Activated T-helper 1 cell treated with anti-CD3 and anti-CD28 coated beads, Interleukin-12 subunit alpha, Interleukin-12 subunit beta, Interleukin-2, Interleukin-4 antibody, amounts not matched to agents 30 ng/mL and 10 ng/mL and 1 ng/mL, durations not matched to agents 14 hours and 24 hours and 36 hours (primary cell): ENCODE measurements at regions of chr6 and their contacts with region 1.

Region 1: GRCh38 chr6:44127186-44128019 is at the starts of genes MRPL14 and TMEM63B:
- DNase-seq: peak; percentile 89
- H3K4me3 Mint-ChIP-seq: peak within 1 kb of the TSS; percentile 90
- H3K27ac Mint-ChIP-seq: peak within 1 kb of the TSS; percentile 94
- H3K4me1 Mint-ChIP-seq: peaks cover 50% of the 10 kb centered on the region
- H3K27me3 Mint-ChIP-seq: no peaks in the 10 kb centered on the region
- total RNA-seq, gene MRPL14: 62.6 and 68.6 TPM in 2 replicates
- total RNA-seq, gene TMEM63B: 17.0 and 20.7 TPM in 2 replicates

Region 2: DNA sequence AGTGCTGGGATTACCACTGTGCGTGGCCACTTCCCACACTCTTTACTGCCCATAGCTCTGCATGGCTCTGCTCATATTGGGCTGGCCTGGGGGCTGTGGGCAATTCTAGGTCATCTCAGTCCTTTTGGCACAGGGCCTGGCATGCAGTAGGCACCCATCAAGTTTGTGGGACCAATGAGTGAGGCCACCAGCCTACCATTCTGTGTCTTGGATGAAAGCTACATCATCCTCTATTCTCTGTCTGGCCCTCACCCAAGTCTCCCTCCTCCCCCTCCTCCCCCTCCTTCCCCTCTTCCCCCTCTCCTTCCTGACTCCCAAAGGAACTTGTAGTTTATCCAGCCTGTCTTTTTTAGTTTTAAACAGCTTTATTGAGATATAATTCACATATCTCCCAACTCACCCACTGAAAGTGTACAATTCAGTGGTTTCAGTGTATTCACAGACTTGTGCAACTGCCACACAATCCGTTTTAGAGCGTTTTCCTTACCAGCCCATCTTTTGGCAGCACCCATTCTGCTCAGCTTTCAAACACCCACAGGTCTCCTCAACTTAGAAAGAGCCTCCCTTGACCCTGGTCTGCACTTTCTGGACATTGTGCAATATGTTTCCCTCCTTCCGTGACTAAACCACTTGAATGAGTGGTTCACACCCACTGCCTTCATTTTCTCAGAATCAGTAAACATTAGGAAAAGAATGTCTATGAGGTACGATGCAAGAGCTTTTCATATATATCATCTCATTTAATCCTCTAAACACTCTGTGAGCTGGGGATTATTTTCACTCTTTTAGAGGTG is 418.3 kb before region 1 on chr6:
- intact Hi-C with region 1: loop called (anchors 1 kb)
- DNase-seq: no peak
- H3K4me3 Mint-ChIP-seq: no peak overlapping the region
- H3K27ac Mint-ChIP-seq: peak overlapping the region; percentile 50
- H3K4me1 Mint-ChIP-seq: peaks cover 30% of the 10 kb centered on the region
- H3K27me3 Mint-ChIP-seq: peaks cover 16% of the 10 kb centered on the region

Region 3: DNA sequence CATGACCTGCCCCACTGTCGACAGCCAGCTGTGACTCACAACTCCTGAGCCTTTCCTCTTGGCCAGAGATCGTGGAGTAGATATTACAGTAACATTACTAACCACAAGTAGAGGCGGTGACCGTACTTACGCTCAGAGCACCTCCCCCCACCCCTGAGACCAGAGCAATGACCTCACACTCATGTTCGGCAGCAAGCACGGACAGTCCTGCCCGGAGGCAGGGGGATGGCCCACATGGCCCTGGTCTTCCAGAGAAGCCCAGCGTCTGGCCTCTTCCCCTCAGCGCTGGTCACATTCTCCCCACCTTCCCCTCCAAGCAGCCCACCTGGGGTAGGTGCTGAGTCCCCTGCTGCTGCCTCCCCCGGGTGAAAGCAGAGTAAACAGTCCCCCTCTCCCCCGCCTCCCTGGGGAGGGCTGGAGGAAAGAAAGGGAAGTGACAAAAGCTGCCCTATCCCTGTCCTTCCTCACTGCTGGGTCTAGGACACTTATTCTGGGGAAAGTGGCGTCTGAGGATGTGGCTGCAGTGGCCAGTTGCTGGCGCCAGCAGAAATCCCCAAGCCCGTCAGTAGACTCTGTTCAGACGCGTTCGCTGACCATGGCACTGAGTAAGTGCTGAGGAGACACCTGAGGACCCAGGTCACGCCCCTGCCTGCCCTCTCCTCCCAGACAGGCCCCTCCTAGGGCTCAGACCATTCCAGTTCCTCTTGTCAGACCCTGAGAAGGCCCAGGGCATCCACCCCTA is 68.6 kb before region 1 on chr6:
- intact Hi-C with region 1: no loop called
- DNase-seq: no peak
- H3K4me3 Mint-ChIP-seq: no peak overlapping the region
- H3K27ac Mint-ChIP-seq: no peak overlapping the region
- H3K4me1 Mint-ChIP-seq: peaks cover 22% of the 10 kb centered on the region
- H3K27me3 Mint-ChIP-seq: peaks cover 5% of the 10 kb centered on the region

Region 4: GRCh38 chr6:44221291-44221960 is 94.0 kb after region 1 on chr6:
- intact Hi-C with region 1: loop called (anchors 1 kb)
- DNase-seq: peak; percentile 68
- H3K4me3 Mint-ChIP-seq: no peak overlapping the region
- H3K27ac Mint-ChIP-seq: peak overlapping the region; percentile 52
- H3K4me1 Mint-ChIP-seq: peaks cover 43% of the 10 kb centered on the region
- H3K27me3 Mint-ChIP-seq: peaks cover 11% of the 10 kb centered on the region

Region 5: GRCh38 chr6:44246663-44247337 is 119.4 kb after region 1 on chr6 and contains the start of gene HSP90AB1:
- intact Hi-C with region 1: loop called (anchors 1 kb)
- DNase-seq: peak; percentile 96
- H3K4me3 Mint-ChIP-seq: peak within 1 kb of the TSS; percentile 96
- H3K27ac Mint-ChIP-seq: peak within 1 kb of the TSS; percentile 98
- H3K4me1 Mint-ChIP-seq: peaks cover 45% of the 10 kb centered on the region
- H3K27me3 Mint-ChIP-seq: peaks cover 5% of the 10 kb centered on the region
- total RNA-seq, gene HSP90AB1: 2,065 and 2,095 TPM in 2 replicates